Sigmoid colon (tissue), 7 donors: ENCODE measurements at regions of chr17 and their contacts with region 1.

Region 1: GRCh38 chr17:72715906-72716572 is 376.4 kb downstream of the SLC39A11 start:
- DNase-seq: no peak
- H3K4me3 ChIP-seq: no peak overlapping the region
- H3K27ac ChIP-seq: no peak overlapping the region
- H3K4me1 ChIP-seq: no peaks in the 10 kb centered on the region
- H3K27me3 ChIP-seq: no peaks in the 10 kb centered on the region
- CTCF ChIP-seq: no peak
- EP300 ChIP-seq: no peak
- POLR2A ChIP-seq: no peak

Region 2: GRCh38 chr17:72587773-72588511 is 128.1 kb before region 1 on chr17:
- intact Hi-C with region 1: loop called (anchors 10 kb)
- DNase-seq: no peak
- H3K4me3 ChIP-seq: no peak overlapping the region
- H3K27ac ChIP-seq: no peak overlapping the region
- H3K4me1 ChIP-seq: peaks cover 0 to 17% (median 14%) of the 10 kb centered on the region in 4 donors
- H3K27me3 ChIP-seq: peaks cover 6 to 39% (median 23%) of the 10 kb centered on the region in 3 donors
- CTCF ChIP-seq: no peak
- EP300 ChIP-seq: no peak
- POLR2A ChIP-seq: no peak

Region 3: GRCh38 chr17:72598695-72599094 is 117.3 kb before region 1 on chr17:
- intact Hi-C with region 1: no loop called
- DNase-seq: no peak
- H3K4me3 ChIP-seq: no peak overlapping the region
- H3K27ac ChIP-seq: no peak overlapping the region
- H3K4me1 ChIP-seq: no peaks in the 10 kb centered on the region
- H3K27me3 ChIP-seq: peaks cover 0 to 23% (median 5%) of the 10 kb centered on the region in 3 donors
- CTCF ChIP-seq: no peak
- EP300 ChIP-seq: no peak
- POLR2A ChIP-seq: no peak

Region 4: DNA sequence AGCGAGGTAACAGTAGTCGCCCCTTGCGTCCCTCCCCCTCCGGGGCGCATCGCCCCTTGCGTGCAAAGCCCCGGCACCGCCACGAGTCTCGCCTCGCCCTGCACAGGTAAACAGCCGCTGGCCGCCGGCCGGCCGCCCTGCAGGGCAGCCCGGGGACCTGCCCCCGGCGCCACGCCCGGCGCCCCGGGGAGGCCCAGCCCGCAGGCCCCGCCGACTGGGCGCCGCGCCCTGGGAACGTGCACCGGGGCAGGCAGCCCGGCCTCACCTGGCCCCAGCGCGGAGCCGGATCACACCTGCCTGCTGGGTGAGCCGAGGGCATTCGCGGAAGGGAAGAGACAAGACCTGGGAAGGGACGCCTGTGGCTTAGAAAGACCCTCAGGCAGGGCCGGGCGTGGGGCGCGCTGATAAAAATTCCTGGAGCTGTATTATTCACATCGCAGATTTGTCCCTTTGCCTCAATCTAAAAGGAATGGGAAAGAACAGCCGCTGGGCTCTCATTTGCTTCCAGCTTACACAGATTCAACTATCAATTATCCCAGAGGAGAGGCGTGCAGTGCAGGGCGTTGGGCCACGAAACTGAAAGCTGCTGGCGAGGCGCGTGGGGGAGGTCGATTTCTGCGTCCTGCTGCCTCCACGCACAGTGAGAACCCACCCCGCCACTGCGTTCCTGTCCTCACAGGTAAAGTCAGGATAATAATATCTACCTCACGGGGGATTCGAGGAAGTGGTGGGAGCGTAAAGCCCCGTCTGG is 75.4 kb before region 1 on chr17:
- intact Hi-C with region 1: no loop called
- DNase-seq: no peak
- H3K4me3 ChIP-seq: no peak overlapping the region
- H3K27ac ChIP-seq: no peak overlapping the region
- H3K4me1 ChIP-seq: no peaks in the 10 kb centered on the region
- H3K27me3 ChIP-seq: peaks cover 0 to 6% (median 0%) of the 10 kb centered on the region in 3 donors
- CTCF ChIP-seq: no peak
- EP300 ChIP-seq: no peak
- POLR2A ChIP-seq: no peak